ENCODE measurements at regions of chr2 and their contacts with region 1.

Region 1: GRCh38 chr2:232611551-232612218 is 21.7 kb upstream of the EFHD1 start:
- DNase-seq: peak; percentile 94 to 97
- H3K4me3 ChIP-seq: no peak overlapping the region
- H3K27ac ChIP-seq: peak overlapping the region; percentile 25
- H3K4me1 ChIP-seq: peaks cover 46% of the 10 kb centered on the region
- H3K27me3 ChIP-seq: no peaks in the 10 kb centered on the region
- CTCF ChIP-seq: peak; percentile 98

Region 2: GRCh38 chr2:232632908-232633732 is 21.4 kb after region 1 on chr2 and contains the start of gene EFHD1:
- CTCF ChIA-PET with region 1: interaction called, 6 read pairs
- POLR2A ChIA-PET with region 1: interaction called, 3 read pairs
- intact Hi-C with region 1: loop called (anchors 1 kb)
- DNase-seq: peak; percentile 51 to 84
- H3K4me3 ChIP-seq: peak within 1 kb of the TSS; percentile 90
- H3K27ac ChIP-seq: no peak within 1 kb of the TSS
- H3K4me1 ChIP-seq: peaks cover 12% of the 10 kb centered on the region
- H3K27me3 ChIP-seq: peaks cover 16% of the 10 kb centered on the region
- CTCF ChIP-seq: no peak
- total RNA-seq, gene EFHD1: 10.6 and 15.0 TPM in 2 replicates

Region 3: GRCh38 chr2:232668805-232669444 is 57.2 kb after region 1 on chr2:
- CTCF ChIA-PET with region 1: interaction called, 10 read pairs
- POLR2A ChIA-PET with region 1: no interaction called
- intact Hi-C with region 1: loop called (anchors 2 kb)
- DNase-seq: no peak
- H3K4me3 ChIP-seq: no peak overlapping the region
- H3K27ac ChIP-seq: no peak overlapping the region
- H3K4me1 ChIP-seq: peaks cover 16% of the 10 kb centered on the region
- H3K27me3 ChIP-seq: no peaks in the 10 kb centered on the region
- CTCF ChIP-seq: peak; percentile 47; the same call in 1 of the 2 replicates

Region 4: GRCh38 chr2:232781765-232782164 is 170.1 kb after region 1 on chr2:
- CTCF ChIA-PET with region 1: interaction called, 10 read pairs
- POLR2A ChIA-PET with region 1: no interaction called
- intact Hi-C with region 1: no loop called
- DNase-seq: peak; percentile 20 to 94
- H3K4me3 ChIP-seq: no peak overlapping the region
- H3K27ac ChIP-seq: peak overlapping the region; percentile 57
- H3K4me1 ChIP-seq: peaks cover 11% of the 10 kb centered on the region
- H3K27me3 ChIP-seq: no peaks in the 10 kb centered on the region
- CTCF ChIP-seq: no peak

Region 5: DNA sequence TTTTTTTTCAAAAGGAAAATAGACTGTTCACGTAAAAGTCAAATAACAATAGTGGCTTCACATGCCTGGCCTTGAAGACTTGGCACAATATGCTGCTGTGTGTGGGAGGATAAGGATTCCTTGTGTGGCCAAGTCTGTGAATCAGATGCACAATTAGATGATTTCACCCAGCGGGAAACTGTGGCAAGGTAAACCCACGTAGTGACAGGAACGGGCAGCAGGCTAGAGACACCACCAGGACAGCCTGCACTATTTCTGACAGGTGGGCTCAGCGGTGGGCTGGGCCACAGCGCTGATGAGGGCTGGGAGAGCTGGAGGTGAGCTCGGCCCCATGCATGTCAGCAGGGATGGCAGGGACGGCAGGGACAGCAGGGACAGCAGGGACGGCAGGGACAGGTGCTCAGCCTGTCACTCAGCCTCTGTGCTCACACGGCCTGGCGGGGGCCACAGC is 280.0 kb after region 1 on chr2:
- CTCF ChIA-PET with region 1: no interaction called
- POLR2A ChIA-PET with region 1: no interaction called
- intact Hi-C with region 1: no loop called
- DNase-seq: no peak
- H3K4me3 ChIP-seq: no peak overlapping the region
- H3K27ac ChIP-seq: no peak overlapping the region
- H3K4me1 ChIP-seq: no peaks in the 10 kb centered on the region
- H3K27me3 ChIP-seq: no peaks in the 10 kb centered on the region
- CTCF ChIP-seq: no peak